ENCODE measurements at regions of chr5 and their contacts with region 1.

Region 1: GRCh38 chr5:10353241-10354047 is at the start of gene MARCHF6:
- DNase-seq: peak; percentile 89 to 98 (median 96)
- ATAC-seq: peak; percentile 89
- H3K4me3 ChIP-seq: peak within 1 kb of the TSS; percentile 83 to 90
- H3K4me3 Mint-ChIP-seq: peak within 1 kb of the TSS; percentile 99
- H3K27ac ChIP-seq: peak within 1 kb of the TSS; percentile 73 to 89
- H3K27ac Mint-ChIP-seq: peak within 1 kb of the TSS; percentile 99
- H3K4me1 ChIP-seq: peaks cover 23% of the 10 kb centered on the region
- H3K4me1 Mint-ChIP-seq: peaks cover 48% of the 10 kb centered on the region
- H3K27me3 ChIP-seq: no peaks in the 10 kb centered on the region
- H3K27me3 Mint-ChIP-seq: no peaks in the 10 kb centered on the region
- CTCF ChIP-seq: no peak
- total RNA-seq, gene MARCHF6: 182 to 189 TPM

Region 2: DNA sequence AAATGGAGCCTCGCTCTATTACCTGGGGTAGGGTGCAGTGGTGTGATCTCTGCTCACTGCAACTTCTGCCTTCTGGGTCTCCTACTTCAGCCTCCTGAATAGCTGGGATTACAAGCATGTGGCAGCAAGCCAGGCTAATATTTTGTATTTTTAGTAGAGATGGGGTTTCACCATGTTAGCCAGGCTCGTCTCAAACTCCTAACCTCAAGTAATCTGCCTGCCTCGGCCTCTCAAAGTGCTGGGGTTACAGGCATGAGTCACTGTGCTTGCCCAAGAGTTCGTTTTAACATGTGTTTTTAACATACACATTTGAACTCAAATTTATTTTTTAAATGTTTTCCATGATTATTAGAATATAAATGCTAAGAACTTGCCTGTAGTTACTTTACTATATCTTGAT is 34.2 kb after region 1 on chr5:
- CTCF ChIA-PET with region 1: no interaction called
- POLR2A ChIA-PET with region 1: no interaction called
- intact Hi-C with region 1: loop called in 1 of 2 experiments (anchors 5 kb)
- DNase-seq: no peak
- ATAC-seq: no peak
- H3K4me3 ChIP-seq: no peak overlapping the region
- H3K4me3 Mint-ChIP-seq: no peak overlapping the region
- H3K27ac ChIP-seq: no peak overlapping the region
- H3K27ac Mint-ChIP-seq: no peak overlapping the region
- H3K4me1 ChIP-seq: no peaks in the 10 kb centered on the region
- H3K4me1 Mint-ChIP-seq: peaks cover 5% of the 10 kb centered on the region
- H3K27me3 ChIP-seq: no peaks in the 10 kb centered on the region
- H3K27me3 Mint-ChIP-seq: no peaks in the 10 kb centered on the region
- CTCF ChIP-seq: no peak

Region 3: GRCh38 chr5:10441083-10441991 is 87.9 kb after region 1 on chr5 and contains the start of gene ROPN1L:
- CTCF ChIA-PET with region 1: no interaction called
- POLR2A ChIA-PET with region 1: interaction called, 4 read pairs
- intact Hi-C with region 1: loop called (anchors 2 to 5 kb)
- DNase-seq: peak; percentile 50 to 88 (median 75)
- ATAC-seq: peak; percentile 94
- H3K4me3 ChIP-seq: peak within 1 kb of the TSS; percentile 76 to 88
- H3K4me3 Mint-ChIP-seq: peak within 1 kb of the TSS; percentile 84
- H3K27ac ChIP-seq: peak within 1 kb of the TSS; percentile 41 to 56
- H3K27ac Mint-ChIP-seq: peak within 1 kb of the TSS; percentile 38
- H3K4me1 ChIP-seq: peaks cover 41% of the 10 kb centered on the region
- H3K4me1 Mint-ChIP-seq: peaks cover 41% of the 10 kb centered on the region
- H3K27me3 ChIP-seq: no peaks in the 10 kb centered on the region
- H3K27me3 Mint-ChIP-seq: no peaks in the 10 kb centered on the region
- CTCF ChIP-seq: no peak
- total RNA-seq, gene ROPN1L: not detected

Region 4: GRCh38 chr5:10627160-10627701 is 273.8 kb after region 1 on chr5:
- CTCF ChIA-PET with region 1: no interaction called
- POLR2A ChIA-PET with region 1: interaction called, 5 read pairs
- intact Hi-C with region 1: loop called in 1 of 2 experiments (anchors 5 kb)
- DNase-seq: peak in 1 of 9 experiments; percentile 21
- ATAC-seq: no peak
- H3K4me3 ChIP-seq: peak overlapping the region; percentile 33 to 61
- H3K4me3 Mint-ChIP-seq: peak overlapping the region; percentile 82
- H3K27ac ChIP-seq: no peak overlapping the region
- H3K27ac Mint-ChIP-seq: peak overlapping the region; percentile 61
- H3K4me1 ChIP-seq: peaks cover 7% of the 10 kb centered on the region
- H3K4me1 Mint-ChIP-seq: peaks cover 17% of the 10 kb centered on the region
- H3K27me3 ChIP-seq: no peaks in the 10 kb centered on the region
- H3K27me3 Mint-ChIP-seq: no peaks in the 10 kb centered on the region
- CTCF ChIP-seq: no peak

Measured in CD8-positive, alpha-beta T cell (primary cell).